Endothelial cell of umbilical vein (primary cell): ENCODE measurements at regions of chr6 and their contacts with region 1.

Region 1: GRCh38 chr6:129646642-129647041 is 63.3 kb downstream of the ARHGAP18 start:
- DNase-seq: no peak
- H3K4me3 ChIP-seq: no peak overlapping the region
- H3K27ac ChIP-seq: peak overlapping the region; percentile 98
- H3K4me1 ChIP-seq: peaks cover 81% of the 10 kb centered on the region
- H3K27me3 ChIP-seq: no peaks in the 10 kb centered on the region
- CTCF ChIP-seq: no peak
- POLR2A ChIP-seq: no peak

Region 2: DNA sequence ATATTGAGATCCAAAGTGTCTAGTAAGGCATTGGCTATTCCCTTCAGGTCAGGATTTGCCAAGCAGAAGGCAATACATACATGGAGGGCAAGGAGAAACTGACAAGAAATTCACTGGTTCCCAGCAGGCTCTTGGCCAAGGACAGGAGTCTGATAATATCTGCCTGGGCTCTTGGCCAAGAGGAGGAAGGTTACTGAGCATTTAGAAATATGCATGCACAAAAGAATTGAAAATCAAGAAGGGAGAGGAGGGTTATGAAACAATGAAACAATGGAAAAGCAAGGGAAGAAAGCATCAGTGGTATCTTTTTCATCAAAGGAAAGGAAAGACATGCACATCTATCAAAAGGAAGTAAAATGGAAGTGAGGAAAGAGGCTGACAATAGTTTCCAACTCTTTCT is 21.0 kb after region 1 on chr6:
- CTCF ChIA-PET with region 1: interaction called, 16 read pairs
- POLR2A ChIA-PET with region 1: interaction called, 6 read pairs
- dilution Hi-C with region 1: no loop called
- intact Hi-C with region 1: loop called (anchors 1 kb)
- DNase-seq: peak; percentile 92
- H3K4me3 ChIP-seq: no peak overlapping the region
- H3K27ac ChIP-seq: peak overlapping the region; percentile 35
- H3K4me1 ChIP-seq: peaks cover 62% of the 10 kb centered on the region
- H3K27me3 ChIP-seq: no peaks in the 10 kb centered on the region
- CTCF ChIP-seq: no peak
- POLR2A ChIP-seq: no peak

Region 3: DNA sequence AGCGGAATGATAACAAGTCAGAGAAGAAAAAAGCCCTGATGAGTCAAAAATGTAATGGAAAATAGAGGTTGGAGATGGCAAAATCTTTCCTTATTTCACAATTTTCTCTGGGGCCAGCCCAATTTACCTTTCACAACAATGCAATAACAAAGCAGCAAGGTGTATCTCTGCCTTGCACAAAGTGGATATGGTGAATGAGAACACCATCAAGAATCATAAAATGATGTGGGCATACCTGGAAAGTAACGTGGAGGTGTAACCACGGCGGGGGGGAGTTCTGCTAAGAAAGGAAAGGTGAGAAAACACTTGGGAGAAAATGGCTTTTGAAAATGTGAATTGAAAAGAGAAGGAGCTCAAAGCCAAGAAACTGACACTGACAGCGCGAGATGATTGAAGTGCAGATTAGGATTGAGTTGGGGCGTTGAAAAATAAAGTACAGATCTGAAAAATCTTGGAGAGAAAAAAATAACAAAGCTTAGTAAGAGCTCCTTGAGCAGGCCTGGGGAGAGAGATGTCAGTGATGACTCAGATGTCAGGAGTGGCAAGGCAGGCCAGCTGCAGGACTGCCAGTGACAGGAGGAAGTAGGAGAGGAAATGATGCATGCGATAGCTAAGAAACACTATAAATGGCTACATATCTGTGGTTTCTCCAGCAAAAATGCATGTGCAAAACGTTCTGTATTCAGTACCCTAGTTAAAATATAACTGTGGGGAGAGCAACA is 37.1 kb after region 1 on chr6:
- CTCF ChIA-PET with region 1: interaction called, 3 read pairs
- POLR2A ChIA-PET with region 1: interaction called, 6 read pairs
- dilution Hi-C with region 1: no loop called
- intact Hi-C with region 1: loop called (anchors 1 kb)
- DNase-seq: peak; percentile 97
- H3K4me3 ChIP-seq: peak overlapping the region in 1 of 3 experiments; percentile 6
- H3K27ac ChIP-seq: peak overlapping the region; percentile 98
- H3K4me1 ChIP-seq: peaks cover 77% of the 10 kb centered on the region
- H3K27me3 ChIP-seq: no peaks in the 10 kb centered on the region
- CTCF ChIP-seq: no peak
- POLR2A ChIP-seq: peak; percentile 82

Region 4: DNA sequence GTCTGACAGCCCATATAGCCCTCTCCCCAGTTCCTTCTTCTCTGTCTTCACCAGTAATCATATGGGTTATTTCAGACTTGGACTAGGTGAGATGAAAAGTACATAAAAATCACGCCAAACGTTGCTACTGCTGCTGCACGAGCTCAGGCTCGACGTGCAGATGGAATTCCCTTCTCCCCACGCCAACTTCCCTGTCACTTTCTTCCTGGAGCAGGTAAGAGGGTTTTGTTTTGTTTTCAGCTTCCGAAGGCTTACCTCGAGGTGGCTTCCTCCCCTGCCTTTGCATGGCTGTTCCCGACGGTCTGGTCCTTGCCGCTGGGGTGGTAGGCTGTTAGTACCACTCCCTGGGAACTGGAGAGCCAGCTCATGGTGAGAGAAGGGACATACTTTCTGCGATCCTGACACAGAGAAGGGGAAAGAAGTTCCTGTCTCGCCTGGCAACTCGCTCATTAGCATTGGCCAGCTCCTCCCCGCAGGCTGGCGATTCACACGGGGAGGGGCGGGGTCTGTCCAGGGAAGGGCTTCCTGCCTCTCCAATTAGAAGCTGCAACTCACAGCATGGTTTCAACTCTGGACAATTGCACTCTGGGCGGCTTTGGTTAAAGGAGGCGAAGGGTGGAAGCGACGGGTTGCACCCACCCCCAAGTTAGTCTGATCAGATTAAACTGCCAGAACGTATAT is 63.3 kb after region 1 on chr6 and contains the start of gene ARHGAP18:
- CTCF ChIA-PET with region 1: interaction called, 4 read pairs
- POLR2A ChIA-PET with region 1: interaction called, 8 read pairs
- dilution Hi-C with region 1: no loop called
- intact Hi-C with region 1: loop called (anchors 1 kb)
- DNase-seq: peak; percentile 97
- H3K4me3 ChIP-seq: peak within 1 kb of the TSS; percentile 60 to 90 (median 90)
- H3K27ac ChIP-seq: peak within 1 kb of the TSS; percentile 63
- H3K4me1 ChIP-seq: peaks cover 44% of the 10 kb centered on the region
- H3K27me3 ChIP-seq: no peaks in the 10 kb centered on the region
- CTCF ChIP-seq: no peak
- POLR2A ChIP-seq: peak; percentile 81
- total RNA-seq, gene ARHGAP18: 86.1 and 111 TPM in 2 replicates

Region 5: GRCh38 chr6:130009146-130009545 is 362.5 kb after region 1 on chr6:
- CTCF ChIA-PET with region 1: no interaction called
- POLR2A ChIA-PET with region 1: no interaction called
- dilution Hi-C with region 1: no loop called
- intact Hi-C with region 1: loop called (anchors 1 kb)
- DNase-seq: peak; percentile 46
- H3K4me3 ChIP-seq: no peak overlapping the region
- H3K27ac ChIP-seq: peak overlapping the region; percentile 94
- H3K4me1 ChIP-seq: peaks cover 28% of the 10 kb centered on the region
- H3K27me3 ChIP-seq: no peaks in the 10 kb centered on the region
- CTCF ChIP-seq: no peak
- POLR2A ChIP-seq: peak; percentile 10